CD4-positive, alpha-beta T cell (primary cell): ENCODE measurements at regions of chr3 and their contacts with region 1.

Region 1: DNA sequence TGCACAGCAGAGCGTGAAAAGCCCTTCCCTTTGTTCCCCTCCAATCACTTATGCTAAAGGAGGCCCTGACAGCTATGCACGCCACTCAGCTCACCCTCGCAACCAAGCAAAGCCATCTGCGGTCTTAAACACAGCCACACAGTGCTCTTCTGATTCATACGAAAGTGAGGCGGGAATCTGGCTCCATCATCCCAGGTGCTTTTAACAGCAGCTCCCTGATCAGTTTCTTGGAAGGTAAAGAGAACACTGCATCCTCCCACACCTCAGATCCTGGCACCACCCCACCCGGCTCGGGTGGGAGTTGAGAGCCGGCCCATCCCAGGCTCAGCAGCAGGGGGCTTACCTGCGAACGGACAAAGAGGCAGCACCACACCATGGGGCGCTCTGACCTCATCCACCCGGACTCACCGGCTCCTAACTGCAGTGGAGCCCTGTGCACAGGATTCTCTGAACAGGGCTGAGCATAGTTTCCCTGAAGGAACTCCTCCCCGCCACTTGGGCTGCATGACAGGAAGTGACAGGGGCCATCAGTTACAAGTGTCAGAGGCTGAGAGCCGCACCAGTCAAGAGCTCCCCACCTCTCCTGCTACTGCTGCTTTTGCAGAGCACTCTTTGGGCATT is 114.3 kb upstream of the ARHGEF3 start:
- DNase-seq: peak; percentile 53 to 86 (median 70)
- ATAC-seq: peak; percentile 94
- H3K4me3 ChIP-seq: peak overlapping the region; percentile 63
- H3K4me3 Mint-ChIP-seq: peak overlapping the region; percentile 92
- H3K27ac ChIP-seq: peak overlapping the region; percentile 69 to 75
- H3K27ac Mint-ChIP-seq: peak overlapping the region; percentile 94
- H3K4me1 ChIP-seq: peaks cover 49% of the 10 kb centered on the region
- H3K4me1 Mint-ChIP-seq: peaks cover 88% of the 10 kb centered on the region
- H3K27me3 ChIP-seq: no peaks in the 10 kb centered on the region
- H3K27me3 Mint-ChIP-seq: no peaks in the 10 kb centered on the region
- CTCF ChIP-seq: no peak

Region 2: DNA sequence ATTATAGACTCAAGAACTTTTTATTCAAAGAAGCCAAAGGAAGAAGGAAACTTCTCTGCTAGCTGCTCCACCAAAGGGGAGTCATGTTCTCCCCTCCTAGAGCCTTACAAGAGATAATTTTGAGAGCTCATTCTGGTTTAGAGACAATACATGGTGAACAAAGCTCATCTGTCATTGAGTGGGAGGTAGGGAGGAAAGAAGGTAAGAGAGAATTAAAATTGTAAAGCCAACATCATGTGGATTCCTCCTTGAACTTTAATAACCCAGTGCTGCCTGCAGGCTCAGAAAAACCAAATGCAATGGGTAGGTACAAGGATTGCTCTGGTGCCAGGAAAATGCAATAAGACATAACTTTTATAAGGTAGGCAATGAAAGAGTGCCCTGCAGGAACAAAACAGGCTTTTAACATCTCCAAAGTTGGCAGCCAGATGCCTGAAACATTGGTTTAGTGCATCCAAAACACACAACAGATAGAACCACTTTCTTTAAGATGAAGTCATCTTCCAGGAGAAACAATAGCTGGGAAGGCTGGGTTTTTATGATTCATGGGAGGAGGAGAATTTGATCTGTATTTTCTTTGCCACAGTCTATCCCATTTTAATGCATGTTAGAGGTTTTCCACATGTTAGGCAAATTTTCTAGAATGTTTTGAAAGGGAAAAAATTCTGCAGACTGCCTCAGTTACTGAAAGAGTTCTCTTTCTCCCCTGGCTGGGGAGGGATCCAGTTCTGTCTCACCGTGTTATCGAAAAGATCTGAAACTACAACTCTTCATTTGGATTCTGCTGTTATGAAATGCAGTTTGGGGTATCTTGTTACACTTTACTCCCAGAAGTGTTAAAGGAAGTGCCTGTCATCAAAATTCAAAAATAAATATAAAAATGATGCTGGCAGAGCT is 103.1 kb before region 1 on chr3:
- CTCF ChIA-PET with region 1: no interaction called
- POLR2A ChIA-PET with region 1: interaction called, 14 read pairs
- intact Hi-C with region 1: loop called in 1 of 2 experiments (anchors 5 kb)
- DNase-seq: no peak
- ATAC-seq: no peak
- H3K4me3 ChIP-seq: no peak overlapping the region
- H3K4me3 Mint-ChIP-seq: peak overlapping the region; percentile 70
- H3K27ac ChIP-seq: peak overlapping the region; percentile 3 to 69
- H3K27ac Mint-ChIP-seq: peak overlapping the region; percentile 80
- H3K4me1 ChIP-seq: peaks cover 48% of the 10 kb centered on the region
- H3K4me1 Mint-ChIP-seq: peaks cover 84% of the 10 kb centered on the region
- H3K27me3 ChIP-seq: no peaks in the 10 kb centered on the region
- H3K27me3 Mint-ChIP-seq: no peaks in the 10 kb centered on the region
- CTCF ChIP-seq: no peak

Region 3: GRCh38 chr3:56878074-56878473 is 38.0 kb before region 1 on chr3:
- CTCF ChIA-PET with region 1: interaction called, 3 read pairs
- POLR2A ChIA-PET with region 1: interaction called, 10 read pairs
- intact Hi-C with region 1: loop called in 1 of 2 experiments (anchors 5 kb)
- DNase-seq: peak in 13 of 14 experiments; percentile 7 to 65 (median 25)
- ATAC-seq: peak; percentile 96
- H3K4me3 ChIP-seq: no peak overlapping the region
- H3K4me3 Mint-ChIP-seq: peak overlapping the region; percentile 67
- H3K27ac ChIP-seq: peak overlapping the region in 1 of 2 donors; percentile 1
- H3K27ac Mint-ChIP-seq: peak overlapping the region; percentile 87
- H3K4me1 ChIP-seq: peaks cover 37% of the 10 kb centered on the region
- H3K4me1 Mint-ChIP-seq: peaks cover 82% of the 10 kb centered on the region
- H3K27me3 ChIP-seq: no peaks in the 10 kb centered on the region
- H3K27me3 Mint-ChIP-seq: no peaks in the 10 kb centered on the region
- CTCF ChIP-seq: no peak

Region 4: GRCh38 chr3:56894881-56895431 is 21.1 kb before region 1 on chr3:
- CTCF ChIA-PET with region 1: no interaction called
- POLR2A ChIA-PET with region 1: interaction called, 11 read pairs
- intact Hi-C with region 1: loop called in 1 of 2 experiments (anchors 2 kb)
- DNase-seq: peak in 4 of 14 experiments; percentile 17 to 58 (median 44)
- ATAC-seq: peak; percentile 81
- H3K4me3 ChIP-seq: no peak overlapping the region
- H3K4me3 Mint-ChIP-seq: peak overlapping the region; percentile 51
- H3K27ac ChIP-seq: peak overlapping the region in 1 of 2 donors; percentile 11
- H3K27ac Mint-ChIP-seq: peak overlapping the region; percentile 80
- H3K4me1 ChIP-seq: peaks cover 48% of the 10 kb centered on the region
- H3K4me1 Mint-ChIP-seq: peaks cover 72% of the 10 kb centered on the region
- H3K27me3 ChIP-seq: no peaks in the 10 kb centered on the region
- H3K27me3 Mint-ChIP-seq: no peaks in the 10 kb centered on the region
- CTCF ChIP-seq: no peak